ENCODE measurements at regions of chr17 and their contacts with region 1.

Region 1: GRCh38 chr17:38982858-38983746 is 15.9 kb upstream of the FBXO47 start:
- DNase-seq: peak; percentile 19
- ATAC-seq: peak; percentile 73
- H3K4me3 ChIP-seq: no peak overlapping the region
- H3K27ac ChIP-seq: no peak overlapping the region
- H3K4me1 ChIP-seq: no peaks in the 10 kb centered on the region
- H3K27me3 ChIP-seq: no peaks in the 10 kb centered on the region
- CTCF ChIP-seq: peak; percentile 70 to 79 (median 77)
- EP300 ChIP-seq: no peak
- POLR2A ChIP-seq: no peak
- RAD21 ChIP-seq: peak; percentile 92

Region 2: DNA sequence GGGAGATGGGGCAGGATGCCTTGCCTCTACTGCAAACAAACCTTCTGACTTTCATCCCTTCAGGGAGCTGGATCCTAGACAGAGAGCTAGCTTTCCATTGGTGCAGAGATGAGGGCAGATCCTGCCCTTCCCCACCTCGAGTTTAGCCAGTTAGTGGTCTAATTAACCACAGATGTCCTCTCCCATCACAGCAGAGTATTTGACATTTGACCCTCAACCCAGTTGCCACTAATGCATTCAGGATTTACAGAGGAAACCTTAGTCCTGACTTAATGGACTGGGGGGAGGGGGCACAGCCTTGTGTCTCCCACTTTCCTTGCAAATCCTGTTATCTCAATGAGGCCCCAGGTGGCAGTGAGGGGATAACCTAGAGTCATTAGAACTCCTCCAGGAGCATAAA is 193.9 kb before region 1 on chr17:
- CTCF ChIA-PET with region 1: no interaction called
- POLR2A ChIA-PET with region 1: no interaction called
- RAD21 ChIA-PET with region 1: no interaction called
- SMC1A ChIA-PET with region 1: no interaction called
- in situ Hi-C with region 1: no loop called
- intact Hi-C with region 1: no loop called
- DNase-seq: no peak
- ATAC-seq: no peak
- H3K4me3 ChIP-seq: no peak overlapping the region
- H3K27ac ChIP-seq: no peak overlapping the region
- H3K4me1 ChIP-seq: no peaks in the 10 kb centered on the region; the same call in 1 of the 2 replicates
- H3K27me3 ChIP-seq: no peaks in the 10 kb centered on the region
- CTCF ChIP-seq: no peak
- EP300 ChIP-seq: no peak
- POLR2A ChIP-seq: no peak
- RAD21 ChIP-seq: no peak

Region 3: DNA sequence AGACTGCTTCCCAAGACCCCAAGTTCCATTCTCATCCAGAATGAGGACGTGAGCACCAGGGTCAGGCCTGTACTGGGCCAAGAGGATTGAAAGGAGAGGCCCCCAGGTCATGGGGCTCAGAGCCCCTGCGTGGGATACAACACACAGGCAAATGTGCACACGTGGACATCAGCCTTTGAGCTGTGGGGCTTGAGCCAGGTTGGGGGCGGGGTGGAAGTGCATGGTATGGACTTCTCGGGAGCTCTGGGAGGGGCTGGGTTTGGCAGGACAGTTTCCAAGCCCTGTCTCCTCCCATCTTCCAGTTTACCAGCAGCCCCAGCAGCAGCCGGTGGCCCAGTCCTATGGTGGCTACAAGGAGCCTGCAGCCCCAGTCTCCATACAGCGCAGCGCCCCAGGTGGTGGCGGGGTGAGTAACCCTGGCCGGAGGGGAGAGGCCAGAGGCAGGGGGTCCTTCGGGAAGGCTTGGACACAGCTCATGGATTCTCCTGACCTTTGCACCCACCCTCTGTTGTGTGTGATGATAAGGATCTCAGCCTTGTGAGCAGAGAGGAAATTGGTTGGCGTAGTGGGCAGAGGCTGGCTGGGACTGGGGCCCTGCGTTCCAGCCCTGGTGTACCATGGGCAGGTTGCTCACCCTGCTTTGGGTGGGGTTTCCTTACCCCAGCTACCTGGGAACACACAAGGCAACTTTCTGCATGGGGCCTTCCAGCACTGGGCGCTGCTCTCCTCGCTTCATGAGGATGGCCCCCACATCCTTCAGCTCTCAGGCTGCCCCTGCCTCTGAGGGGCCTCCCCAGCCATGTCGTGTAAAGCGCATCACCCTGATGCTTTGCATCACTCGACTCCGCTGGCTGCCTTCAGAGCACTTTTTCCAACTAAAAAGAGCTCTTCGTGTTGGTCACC is 68.1 kb before region 1 on chr17:
- CTCF ChIA-PET with region 1: no interaction called
- POLR2A ChIA-PET with region 1: no interaction called
- RAD21 ChIA-PET with region 1: no interaction called
- SMC1A ChIA-PET with region 1: no interaction called
- in situ Hi-C with region 1: no loop called
- intact Hi-C with region 1: no loop called
- DNase-seq: no peak
- ATAC-seq: no peak
- H3K4me3 ChIP-seq: no peak overlapping the region
- H3K27ac ChIP-seq: no peak overlapping the region
- H3K4me1 ChIP-seq: no peaks in the 10 kb centered on the region
- H3K27me3 ChIP-seq: no peaks in the 10 kb centered on the region
- CTCF ChIP-seq: no peak
- EP300 ChIP-seq: no peak
- POLR2A ChIP-seq: no peak
- RAD21 ChIP-seq: no peak

Region 4: GRCh38 chr17:38967290-38967738 is 15.8 kb before region 1 on chr17 and contains the start of gene FBXO47:
- CTCF ChIA-PET with region 1: interaction called, 12 read pairs
- POLR2A ChIA-PET with region 1: no interaction called
- RAD21 ChIA-PET with region 1: interaction called, 3 read pairs
- SMC1A ChIA-PET with region 1: interaction called, 5 read pairs
- in situ Hi-C with region 1: no loop called
- intact Hi-C with region 1: no loop called
- DNase-seq: no peak
- ATAC-seq: peak; percentile 36; the same call in 2 of the 3 replicates
- H3K4me3 ChIP-seq: no peak within 1 kb of the TSS
- H3K27ac ChIP-seq: no peak within 1 kb of the TSS
- H3K4me1 ChIP-seq: no peaks in the 10 kb centered on the region
- H3K27me3 ChIP-seq: no peaks in the 10 kb centered on the region; a peak in 1 of 4 replicates
- CTCF ChIP-seq: no peak
- EP300 ChIP-seq: no peak
- POLR2A ChIP-seq: no peak
- RAD21 ChIP-seq: no peak
- polyA plus RNA-seq, gene FBXO47: 0.04 to 0.06 TPM

Region 5: DNA sequence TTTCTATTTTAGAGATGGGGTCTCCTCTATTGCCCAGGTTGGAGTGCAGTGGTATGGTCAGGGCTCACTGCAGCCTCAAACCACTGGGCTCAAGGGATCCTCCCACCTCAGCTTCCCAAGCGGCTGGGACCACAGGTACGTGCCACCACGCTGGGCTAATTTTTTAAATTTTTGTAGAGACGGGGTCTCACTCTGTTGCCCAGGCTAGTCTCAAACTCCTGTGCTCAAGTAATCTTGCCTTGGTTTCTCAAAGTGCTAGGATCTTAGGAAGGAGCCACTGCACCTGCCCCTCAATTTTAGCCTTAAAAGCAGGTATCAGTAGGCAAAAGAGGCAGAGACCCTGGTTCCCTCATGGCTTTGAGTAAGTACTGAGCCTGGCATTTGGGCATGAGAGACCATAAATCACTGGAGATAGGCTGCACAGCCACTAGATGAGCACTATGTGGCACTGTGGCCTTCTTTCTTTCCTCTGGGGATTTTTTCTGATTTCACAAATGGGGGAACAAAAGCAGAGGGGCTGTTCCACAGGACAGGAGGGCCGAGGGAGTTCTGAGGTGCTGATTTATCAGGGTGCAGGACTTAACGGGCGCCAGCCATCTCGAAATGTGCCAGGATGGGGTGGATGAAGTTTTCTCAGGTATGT is 86.1 kb after region 1 on chr17:
- CTCF ChIA-PET with region 1: interaction called, 4 read pairs
- POLR2A ChIA-PET with region 1: no interaction called
- RAD21 ChIA-PET with region 1: interaction called, 7 read pairs
- SMC1A ChIA-PET with region 1: interaction called, 5 read pairs
- in situ Hi-C with region 1: no loop called
- intact Hi-C with region 1: loop called (anchors 2 kb)
- DNase-seq: no peak
- ATAC-seq: peak; percentile 89
- H3K4me3 ChIP-seq: no peak overlapping the region
- H3K27ac ChIP-seq: no peak overlapping the region
- H3K4me1 ChIP-seq: no peaks in the 10 kb centered on the region
- H3K27me3 ChIP-seq: peaks cover 0 to 5% of the 10 kb centered on the region in 2 experiments; a peak in 2 of 4 replicates
- CTCF ChIP-seq: peak; percentile 68 to 79 (median 69); a peak in 5 of 6 replicates
- EP300 ChIP-seq: no peak
- POLR2A ChIP-seq: no peak
- RAD21 ChIP-seq: peak; percentile 82

Region 6: DNA sequence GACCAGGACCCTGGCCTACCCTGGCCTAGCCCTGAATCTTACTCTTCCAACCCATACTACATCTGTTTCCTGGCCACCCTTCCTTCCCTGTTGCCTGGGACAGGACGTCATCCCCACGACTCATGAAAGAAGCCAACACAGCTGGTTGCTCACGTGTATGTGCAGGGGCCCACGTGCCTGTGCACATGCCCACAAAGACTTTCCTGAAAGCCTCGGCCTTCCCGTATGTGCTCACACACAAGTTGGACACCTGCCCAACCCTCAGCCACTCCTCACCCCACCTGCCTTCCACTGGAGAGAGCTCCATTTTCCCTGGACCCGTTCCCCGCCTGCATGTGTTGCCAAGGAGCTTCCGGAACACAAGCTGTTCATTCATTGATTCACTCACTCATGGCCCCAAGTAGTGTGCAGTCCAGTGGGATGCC is 161.3 kb after region 1 on chr17:
- CTCF ChIA-PET with region 1: interaction called, 13 read pairs
- POLR2A ChIA-PET with region 1: interaction called, 5 read pairs
- RAD21 ChIA-PET with region 1: interaction called, 12 read pairs
- SMC1A ChIA-PET with region 1: interaction called, 6 read pairs
- in situ Hi-C with region 1: no loop called
- intact Hi-C with region 1: no loop called
- DNase-seq: no peak
- ATAC-seq: no peak
- H3K4me3 ChIP-seq: no peak overlapping the region
- H3K27ac ChIP-seq: no peak overlapping the region
- H3K4me1 ChIP-seq: no peaks in the 10 kb centered on the region
- H3K27me3 ChIP-seq: peaks cover 0 to 4% of the 10 kb centered on the region in 2 experiments; a peak in 2 of 4 replicates
- CTCF ChIP-seq: no peak
- EP300 ChIP-seq: no peak
- POLR2A ChIP-seq: no peak
- RAD21 ChIP-seq: no peak

Region 7: GRCh38 chr17:39174907-39175694 is 192.0 kb after region 1 on chr17:
- CTCF ChIA-PET with region 1: interaction called, 79 read pairs
- POLR2A ChIA-PET with region 1: no interaction called
- RAD21 ChIA-PET with region 1: interaction called, 37 read pairs
- SMC1A ChIA-PET with region 1: interaction called, 14 read pairs
- in situ Hi-C with region 1: no loop called
- intact Hi-C with region 1: no loop called
- DNase-seq: no peak
- ATAC-seq: peak; percentile 93
- H3K4me3 ChIP-seq: no peak overlapping the region
- H3K27ac ChIP-seq: no peak overlapping the region
- H3K4me1 ChIP-seq: no peaks in the 10 kb centered on the region
- H3K27me3 ChIP-seq: no peaks in the 10 kb centered on the region
- CTCF ChIP-seq: peak; percentile 69 to 83 (median 81)
- EP300 ChIP-seq: no peak
- POLR2A ChIP-seq: no peak
- RAD21 ChIP-seq: peak; percentile 49

Region 8: GRCh38 chr17:39209317-39210092 is 226.4 kb after region 1 on chr17:
- CTCF ChIA-PET with region 1: interaction called, 11 read pairs
- POLR2A ChIA-PET with region 1: no interaction called
- RAD21 ChIA-PET with region 1: interaction called, 8 read pairs
- SMC1A ChIA-PET with region 1: interaction called, 6 read pairs
- in situ Hi-C with region 1: no loop called
- intact Hi-C with region 1: no loop called
- DNase-seq: no peak
- ATAC-seq: peak; percentile 12
- H3K4me3 ChIP-seq: peak overlapping the region; percentile 34; the same call in 1 of the 2 replicates
- H3K27ac ChIP-seq: no peak overlapping the region; the same call in 1 of the 2 replicates
- H3K4me1 ChIP-seq: peaks cover 27% of the 10 kb centered on the region
- H3K27me3 ChIP-seq: peaks cover 2 to 3% of the 10 kb centered on the region in 2 experiments; a peak in 1 of 4 replicates
- CTCF ChIP-seq: no peak
- EP300 ChIP-seq: no peak
- POLR2A ChIP-seq: peak; percentile 41; the same call in 1 of the 2 replicates
- RAD21 ChIP-seq: no peak

Region 9: DNA sequence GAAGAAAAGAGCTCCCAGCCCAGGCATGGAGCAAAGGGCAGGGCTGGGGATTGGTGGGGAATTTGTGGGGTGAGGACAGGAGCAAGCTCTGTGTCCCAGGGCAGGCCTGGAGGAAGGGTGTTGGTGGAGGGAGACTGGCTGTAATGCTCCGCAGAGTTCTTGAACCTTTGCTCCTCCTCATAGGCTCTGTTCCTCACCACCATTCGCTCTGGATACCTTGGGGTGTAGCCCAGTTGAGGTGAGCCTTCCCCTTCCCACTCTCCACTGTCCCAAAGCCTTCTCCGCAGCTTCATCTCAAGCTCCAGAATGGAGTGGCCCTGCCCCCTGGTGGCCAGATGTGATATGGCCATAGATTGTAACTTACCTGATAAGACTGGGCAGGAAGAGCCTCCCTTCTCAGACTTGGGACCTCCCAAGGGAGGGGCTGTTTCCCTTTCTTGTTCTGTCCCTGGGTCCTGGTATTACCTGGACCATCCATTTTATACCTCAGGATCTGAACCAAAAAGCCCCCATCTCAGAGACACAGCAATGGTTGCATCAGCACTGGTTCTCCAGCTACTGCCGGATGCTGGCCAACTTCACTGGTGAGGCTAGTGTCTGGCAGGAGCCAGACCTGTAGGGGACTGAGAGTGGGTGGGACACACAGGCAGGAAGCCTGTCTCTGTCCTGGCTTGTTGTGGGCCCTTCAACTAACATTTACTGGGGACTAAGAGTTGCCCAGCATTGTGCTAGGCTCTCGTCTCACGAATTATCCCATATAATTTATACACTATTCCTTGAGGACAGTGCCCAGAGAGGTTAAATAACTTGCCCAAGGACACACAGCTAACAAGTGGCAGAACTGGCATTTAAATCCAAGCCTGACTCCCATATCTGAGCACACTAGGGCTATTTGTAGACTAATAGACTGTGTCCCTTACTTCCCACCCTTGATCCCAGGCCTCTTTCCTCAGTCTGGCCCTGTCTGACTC is 261.8 kb after region 1 on chr17:
- CTCF ChIA-PET with region 1: interaction called, 46 read pairs
- POLR2A ChIA-PET with region 1: no interaction called
- RAD21 ChIA-PET with region 1: interaction called, 59 read pairs
- SMC1A ChIA-PET with region 1: interaction called, 11 read pairs
- in situ Hi-C with region 1: no loop called
- intact Hi-C with region 1: loop called (anchors 2 kb)
- DNase-seq: peak; percentile 40
- ATAC-seq: peak; percentile 96
- H3K4me3 ChIP-seq: no peak overlapping the region
- H3K27ac ChIP-seq: no peak overlapping the region
- H3K4me1 ChIP-seq: peaks cover 9% of the 10 kb centered on the region
- H3K27me3 ChIP-seq: no peaks in the 10 kb centered on the region; a peak in 2 of 4 replicates
- CTCF ChIP-seq: peak; percentile 90 to 97 (median 94); a peak in 5 of 6 replicates
- EP300 ChIP-seq: no peak
- POLR2A ChIP-seq: no peak
- RAD21 ChIP-seq: peak; percentile 90

Measured in GM12878 (cell line).